Prostate gland (tissue), 2 donors: ENCODE measurements at regions of chr17 and their contacts with region 1.

Region 1: DNA sequence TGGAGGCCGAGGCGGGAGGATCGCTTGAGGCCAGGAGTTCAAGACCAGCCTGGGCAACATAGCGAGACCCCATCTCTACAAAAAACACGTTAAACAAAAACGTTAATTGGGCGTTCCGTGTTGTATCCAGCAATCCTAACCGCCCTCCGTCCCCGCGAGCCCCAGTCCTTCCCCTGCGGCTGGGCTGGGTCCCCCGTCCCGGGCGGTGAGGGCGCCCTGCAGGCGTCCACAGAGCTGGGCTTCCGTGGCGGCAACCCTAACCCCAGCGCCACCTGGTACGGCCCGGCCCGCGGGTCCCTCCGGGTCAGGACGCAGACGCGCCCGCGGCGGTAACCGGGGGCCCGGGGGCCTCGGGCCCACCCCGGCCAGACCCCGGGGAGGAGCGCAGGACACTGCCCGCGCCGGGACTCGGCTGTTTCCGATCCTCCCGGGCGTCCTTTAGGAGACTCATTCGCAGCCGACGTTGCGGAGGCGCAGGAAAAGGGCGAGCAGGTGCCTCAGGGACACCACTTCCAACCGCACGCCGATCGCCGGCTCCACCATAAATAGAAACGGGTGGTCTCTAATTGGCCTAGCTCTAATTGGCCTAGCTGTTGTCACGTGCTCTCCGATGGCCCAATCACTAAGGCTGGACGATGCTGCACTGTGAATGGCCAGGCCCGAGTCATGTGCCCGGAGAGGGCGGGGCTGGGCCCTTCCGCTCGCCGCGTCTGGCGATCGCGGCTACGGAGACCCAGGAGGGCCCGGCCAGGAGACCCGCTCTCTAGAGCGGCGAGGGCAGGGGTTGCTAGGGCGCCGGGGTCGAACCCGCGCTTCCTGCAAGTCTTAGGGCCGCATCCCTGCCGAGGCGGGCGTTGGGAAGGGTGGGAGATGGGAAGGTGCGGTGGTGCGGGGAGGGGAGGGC is 19.0 kb upstream of the CSNK1D start:
- DNase-seq: peak; percentile 96
- H3K4me3 ChIP-seq: peak overlapping the region; percentile 81 to 82
- H3K27ac ChIP-seq: peak overlapping the region; percentile 99
- H3K4me1 ChIP-seq: peaks cover 18% of the 10 kb centered on the region
- H3K27me3 ChIP-seq: no peaks in the 10 kb centered on the region
- CTCF ChIP-seq: no peak
- POLR2A ChIP-seq: peak; percentile 99

Region 2: DNA sequence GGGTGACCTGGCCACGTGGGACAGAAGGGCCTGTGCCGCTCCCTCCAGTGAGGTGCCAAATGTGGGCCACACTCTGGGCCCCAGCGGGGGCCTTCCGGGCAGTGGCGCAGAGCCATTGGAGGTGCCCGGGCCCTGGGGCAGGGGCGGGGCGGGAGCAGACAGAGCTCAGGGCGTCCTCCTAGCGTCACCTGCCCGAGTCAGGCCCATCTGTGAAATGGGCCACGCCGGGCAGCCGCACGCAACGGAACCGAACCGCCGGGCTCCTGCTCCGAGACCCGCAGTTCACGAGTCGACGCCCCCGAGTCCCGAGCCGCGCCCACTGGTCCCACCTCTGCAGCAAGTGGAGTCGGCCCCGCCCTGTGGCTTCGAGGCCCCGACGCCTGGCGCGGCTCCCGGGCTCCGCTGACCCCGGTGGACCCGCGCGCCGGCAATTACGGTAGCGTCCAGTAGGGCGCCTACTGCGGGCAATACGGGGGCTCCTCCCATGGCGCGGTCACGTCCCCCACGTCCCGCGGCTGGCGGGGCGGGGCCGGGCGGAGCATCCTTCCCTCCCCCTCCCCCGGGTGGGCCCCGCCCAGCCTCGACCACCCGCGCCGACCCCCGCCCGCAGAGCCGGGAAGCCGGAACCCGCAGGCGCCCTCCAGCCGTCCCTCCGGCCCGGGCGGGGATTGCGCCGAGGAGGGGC is 61.7 kb before region 1 on chr17:
- intact Hi-C with region 1: loop called (anchors 10 kb)
- DNase-seq: no peak
- H3K4me3 ChIP-seq: peak overlapping the region; percentile 37 to 39
- H3K27ac ChIP-seq: peak overlapping the region; percentile 80 to 88
- H3K4me1 ChIP-seq: peaks cover 22% of the 10 kb centered on the region
- H3K27me3 ChIP-seq: no peaks in the 10 kb centered on the region
- CTCF ChIP-seq: peak in 2 of 4 experiments; percentile 56 to 66
- POLR2A ChIP-seq: peak; percentile 53

Region 3: DNA sequence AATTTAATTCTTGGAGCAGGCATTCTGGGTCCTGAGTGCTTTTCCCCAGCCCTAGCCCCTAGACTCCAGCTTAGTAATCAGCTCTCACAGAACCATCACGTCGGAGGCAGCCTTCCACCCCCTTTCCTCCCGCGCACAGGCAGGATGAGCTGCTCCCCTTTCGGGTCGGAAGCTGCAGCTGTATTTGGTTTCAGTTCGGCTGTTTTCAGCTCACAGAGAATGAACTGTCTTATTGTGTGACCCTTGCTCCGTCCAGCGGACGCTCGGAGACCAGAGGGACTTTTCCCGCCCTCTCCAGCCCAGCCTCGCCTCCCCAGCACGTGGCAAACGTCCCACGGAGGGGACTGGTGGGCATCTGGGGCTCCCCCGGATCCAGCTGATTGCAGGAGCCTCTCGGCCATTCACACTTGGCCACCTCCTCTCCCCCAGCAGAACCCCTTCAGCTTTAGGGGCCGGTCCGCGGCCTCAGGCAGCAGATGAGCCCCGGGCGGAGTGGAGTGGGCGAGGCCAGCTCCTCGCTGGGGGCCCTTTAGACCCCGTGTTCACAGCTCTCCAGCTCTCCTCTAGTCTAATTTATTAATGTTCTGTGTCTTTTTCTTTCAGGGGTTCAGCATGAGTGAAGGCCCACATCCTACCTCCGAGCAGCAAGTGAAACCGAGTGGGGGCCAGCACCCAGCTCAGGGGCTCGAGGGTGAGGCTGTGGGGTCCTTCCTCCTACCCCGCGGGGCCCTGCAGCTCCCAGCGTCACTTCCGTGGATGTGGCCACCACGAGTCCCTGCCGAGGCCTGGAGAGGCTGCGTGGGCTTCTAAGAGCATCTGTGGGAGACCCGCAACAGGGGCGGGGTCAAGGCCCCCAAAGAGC is 78.2 kb after region 1 on chr17:
- intact Hi-C with region 1: no loop called
- DNase-seq: no peak
- H3K4me3 ChIP-seq: no peak overlapping the region
- H3K27ac ChIP-seq: no peak overlapping the region
- H3K4me1 ChIP-seq: peaks cover 4% of the 10 kb centered on the region
- H3K27me3 ChIP-seq: peaks cover 29% of the 10 kb centered on the region
- CTCF ChIP-seq: no peak
- POLR2A ChIP-seq: no peak

Region 4: GRCh38 chr17:82507631-82508175 is 215.2 kb after region 1 on chr17:
- intact Hi-C with region 1: no loop called
- DNase-seq: no peak
- H3K4me3 ChIP-seq: no peak overlapping the region
- H3K27ac ChIP-seq: no peak overlapping the region
- H3K4me1 ChIP-seq: no peaks in the 10 kb centered on the region
- H3K27me3 ChIP-seq: no peaks in the 10 kb centered on the region
- CTCF ChIP-seq: no peak
- POLR2A ChIP-seq: no peak